ENCODE measurements at regions of chr17 and their contacts with region 1.

Region 1: DNA sequence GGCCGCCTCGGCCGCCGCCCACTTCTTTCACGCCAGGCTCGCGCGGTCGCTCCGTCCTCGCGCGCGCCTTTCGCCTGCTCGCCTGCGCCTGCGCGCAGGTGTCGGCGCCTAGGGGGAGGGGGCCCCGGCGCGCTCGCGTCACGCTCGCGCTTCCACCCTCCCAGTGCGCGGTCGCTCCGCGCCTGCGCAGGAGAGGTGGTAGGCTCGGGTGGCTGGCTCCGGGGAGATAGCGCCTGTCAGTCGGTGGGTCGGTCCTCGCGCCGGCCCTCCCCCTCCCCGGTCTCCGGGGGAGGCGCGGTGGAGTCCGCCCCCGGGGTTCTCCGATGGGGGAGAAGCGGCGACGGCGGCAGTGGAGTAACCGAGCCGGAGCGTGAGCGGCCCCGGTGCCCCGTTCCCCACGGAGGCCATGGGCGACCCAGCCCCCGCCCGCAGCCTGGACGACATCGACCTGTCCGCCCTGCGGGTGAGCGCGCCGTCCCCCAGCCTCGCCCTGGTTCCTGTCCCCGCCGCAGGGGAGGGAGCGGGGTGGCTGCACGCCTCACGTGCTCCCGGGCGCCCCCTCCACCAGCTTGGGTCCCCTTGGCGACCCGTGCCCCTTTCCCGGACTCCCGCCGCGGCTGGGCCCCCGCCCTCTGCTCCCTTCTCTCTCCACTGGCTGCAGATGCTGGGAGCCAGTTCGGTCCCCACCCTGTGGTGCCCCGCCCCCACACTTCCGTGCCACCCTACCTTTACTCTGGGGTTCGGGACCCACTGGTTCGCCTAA is at the start of gene MINK1:
- DNase-seq: peak; percentile 70 to 91 (median 86)
- H3K4me3 ChIP-seq: peak within 1 kb of the TSS; percentile 61 to 100 (median 98)
- H3K27ac ChIP-seq: peak within 1 kb of the TSS; percentile 58 to 100 (median 98)
- H3K27me3 ChIP-seq: no peaks in the 10 kb centered on the region
- CTCF ChIP-seq: peak in 13 of 56 donors; percentile 4 to 41 (median 18)
- total RNA-seq, gene MINK1: 153 to 287 (median 196) TPM

Region 2: GRCh38 chr17:4709794-4710692 is 123.3 kb before region 1 on chr17 and contains the start of gene ARRB2:
- intact Hi-C with region 1: loop called in 1 of 2 experiments (anchors 1 kb)
- DNase-seq: peak; percentile 97 to 99 (median 99)
- H3K4me3 ChIP-seq: peak within 1 kb of the TSS; percentile 65 to 88 (median 80)
- H3K27ac ChIP-seq: peak within 1 kb of the TSS; percentile 7 to 95 (median 89)
- H3K27me3 ChIP-seq: no peaks in the 10 kb centered on the region
- CTCF ChIP-seq: peak in 54 of 56 donors; percentile 28 to 74 (median 54)
- total RNA-seq, gene ARRB2: 66.2 to 131 (median 94.9) TPM

Region 3: GRCh38 chr17:4759776-4760236 is 73.6 kb before region 1 on chr17:
- intact Hi-C with region 1: no loop called
- DNase-seq: no peak
- H3K4me3 ChIP-seq: no peak overlapping the region
- H3K27ac ChIP-seq: no peak overlapping the region
- H3K27me3 ChIP-seq: peaks cover 0 to 3% (median 0%) of the 10 kb centered on the region in 45 donors
- CTCF ChIP-seq: no peak

Region 4: DNA sequence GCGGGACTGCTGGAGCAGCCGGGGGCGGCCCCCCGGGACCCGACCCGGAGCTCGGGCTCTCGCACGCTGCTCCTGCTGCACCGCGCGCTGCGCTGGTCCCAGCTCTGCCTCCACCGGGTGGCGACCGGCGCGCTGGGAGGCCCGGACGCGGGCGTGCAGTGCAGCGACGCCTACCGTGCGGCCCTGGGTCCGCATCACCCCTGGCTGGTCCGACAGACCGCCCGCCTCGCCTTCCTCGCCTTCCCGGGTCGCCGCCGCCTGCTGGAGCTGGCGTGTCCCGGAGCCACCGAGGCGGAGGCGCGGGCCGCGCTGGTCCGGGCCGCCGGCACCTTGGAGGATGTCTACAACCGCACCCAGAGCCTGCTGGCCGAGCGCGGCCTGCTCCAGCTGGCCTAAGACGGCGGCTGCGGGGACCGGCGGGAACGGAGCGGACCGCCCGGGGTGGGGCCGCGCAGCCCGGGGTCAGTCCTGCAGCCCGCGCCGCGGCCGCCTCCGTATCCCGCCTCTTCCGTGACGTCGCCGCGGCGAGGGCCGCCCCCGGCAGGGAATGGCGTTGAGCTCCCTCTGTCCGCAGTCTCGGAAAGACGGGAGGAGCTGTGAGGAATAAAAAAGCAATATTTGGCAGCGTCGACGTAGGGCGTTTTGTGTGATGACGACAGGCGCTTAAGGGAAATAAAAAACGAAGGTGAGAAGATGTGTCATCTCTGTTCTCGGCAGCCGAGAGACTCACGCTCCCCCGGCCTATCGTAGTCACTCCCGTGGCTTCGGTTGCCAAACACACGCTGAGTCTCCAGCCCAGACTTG is 43.3 kb before region 1 on chr17:
- intact Hi-C with region 1: loop called (anchors 2 to 5 kb)
- DNase-seq: peak; percentile 62 to 91 (median 86)
- H3K4me3 ChIP-seq: peak overlapping the region; percentile 51 to 92 (median 80)
- H3K27ac ChIP-seq: peak overlapping the region; percentile 79 to 99 (median 98)
- H3K27me3 ChIP-seq: peaks cover 0 to 7% (median 0%) of the 10 kb centered on the region in 45 donors
- CTCF ChIP-seq: peak in 55 of 56 donors; percentile 40 to 97 (median 73)

Region 5: GRCh38 chr17:4796553-4796921 is 36.8 kb before region 1 on chr17:
- intact Hi-C with region 1: loop called (anchors 2 to 5 kb)
- DNase-seq: peak in 1 of 10 donors; percentile 41
- H3K4me3 ChIP-seq: peak overlapping the region; percentile 62 to 99 (median 84)
- H3K27ac ChIP-seq: peak overlapping the region in 58 of 59 donors; percentile 19 to 96 (median 87)
- H3K27me3 ChIP-seq: no peaks in the 10 kb centered on the region
- CTCF ChIP-seq: no peak

Region 6: GRCh38 chr17:4858882-4859260 is 25.5 kb after region 1 on chr17:
- intact Hi-C with region 1: loop called in 1 of 2 experiments (anchors 2 kb)
- DNase-seq: peak in 7 of 10 donors; percentile 45 to 80 (median 54)
- H3K4me3 ChIP-seq: peak overlapping the region in 41 of 59 donors; percentile 1 to 53 (median 28)
- H3K27ac ChIP-seq: peak overlapping the region; percentile 80 to 99 (median 95)
- H3K27me3 ChIP-seq: no peaks in the 10 kb centered on the region
- CTCF ChIP-seq: no peak

Region 7: GRCh38 chr17:4881761-4882555 is 48.6 kb after region 1 on chr17:
- intact Hi-C with region 1: loop called (anchors 2 kb)
- DNase-seq: peak; percentile 60 to 76 (median 69)
- H3K4me3 ChIP-seq: peak overlapping the region in 12 of 59 donors; percentile 4 to 33 (median 15)
- H3K27ac ChIP-seq: peak overlapping the region in 58 of 59 donors; percentile 18 to 99 (median 86)
- H3K27me3 ChIP-seq: no peaks in the 10 kb centered on the region
- CTCF ChIP-seq: peak; percentile 68 to 96 (median 86)

Measured in dorsolateral prefrontal cortex (tissue), 120 donors.